ENCODE measurements at regions of chr11 and their contacts with region 1.

Region 1: GRCh38 chr11:5449023-5449422 is at the start of gene OR51I2:
- DNase-seq: no peak
- ATAC-seq: no peak
- H3K4me3 ChIP-seq: no peak within 1 kb of the TSS
- H3K27ac ChIP-seq: no peak within 1 kb of the TSS; the same call in 2 of the 3 replicates
- H3K4me1 ChIP-seq: no peaks in the 10 kb centered on the region; a peak in 1 of 5 replicates
- H3K27me3 ChIP-seq: no peaks in the 10 kb centered on the region
- CTCF ChIP-seq: no peak
- EP300 ChIP-seq: no peak
- POLR2A ChIP-seq: no peak
- RAD21 ChIP-seq: no peak
- polyA plus RNA-seq, gene OR51I2: 0.06 to 0.61 TPM

Region 2: DNA sequence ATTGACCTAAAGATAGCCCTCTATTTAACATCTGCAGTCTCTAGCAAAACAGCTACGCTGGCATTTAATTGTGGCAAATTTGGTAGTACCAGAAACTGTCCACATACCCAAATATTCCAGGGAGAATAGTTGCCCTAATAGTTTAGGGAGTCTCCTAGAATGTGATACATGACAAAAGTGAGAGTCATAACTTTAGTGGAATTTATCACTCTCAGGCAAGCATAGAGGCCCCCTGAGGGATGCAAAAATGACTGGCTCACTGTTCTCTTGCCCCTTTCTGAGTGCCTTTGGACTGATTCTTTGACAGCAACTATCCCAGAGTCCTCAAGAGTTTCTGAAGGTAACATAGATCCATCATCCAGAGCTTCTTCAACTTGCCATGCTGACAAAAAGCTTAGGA is 145.0 kb before region 1 on chr11:
- CTCF ChIA-PET with region 1: no interaction called
- POLR2A ChIA-PET with region 1: interaction called, 3 read pairs
- in situ Hi-C with region 1: loop called (anchors 5 kb)
- intact Hi-C with region 1: no loop called
- DNase-seq: no peak
- ATAC-seq: no peak
- H3K4me3 ChIP-seq: no peak overlapping the region
- H3K27ac ChIP-seq: no peak overlapping the region
- H3K4me1 ChIP-seq: peaks cover 0 to 3% of the 10 kb centered on the region in 2 experiments; a peak in 2 of 5 replicates
- H3K27me3 ChIP-seq: no peaks in the 10 kb centered on the region
- CTCF ChIP-seq: no peak
- EP300 ChIP-seq: no peak
- POLR2A ChIP-seq: no peak
- RAD21 ChIP-seq: no peak

Region 3: DNA sequence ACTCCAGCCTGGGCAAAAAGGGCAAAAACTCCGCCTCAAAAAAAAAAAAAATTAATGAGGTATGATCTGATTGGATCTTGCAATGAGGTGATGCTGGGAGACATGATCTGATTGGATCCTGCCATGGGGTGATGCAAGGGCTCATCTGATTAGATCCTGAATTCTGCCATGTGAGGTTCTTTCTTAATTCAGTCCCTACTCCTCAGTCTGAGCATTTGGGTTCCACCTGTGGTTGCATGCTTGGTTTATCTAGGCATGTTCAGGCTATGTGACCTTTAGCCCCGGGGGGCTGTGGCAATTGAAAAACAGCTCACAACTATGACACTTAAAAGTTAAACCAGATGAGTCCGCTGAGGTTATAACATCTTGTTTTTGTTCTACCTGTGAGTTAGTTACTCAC is 142.6 kb after region 1 on chr11:
- CTCF ChIA-PET with region 1: no interaction called
- POLR2A ChIA-PET with region 1: no interaction called
- in situ Hi-C with region 1: no loop called
- intact Hi-C with region 1: no loop called
- DNase-seq: peak; percentile 21 to 78 (median 36)
- ATAC-seq: peak; percentile 60
- H3K4me3 ChIP-seq: no peak overlapping the region
- H3K27ac ChIP-seq: peak overlapping the region; percentile 50
- H3K4me1 ChIP-seq: peaks cover 6 to 12% of the 10 kb centered on the region in 2 experiments; a peak in 4 of 5 replicates
- H3K27me3 ChIP-seq: no peaks in the 10 kb centered on the region
- CTCF ChIP-seq: no peak
- EP300 ChIP-seq: peak; percentile 52; the same call in 1 of the 2 replicates
- POLR2A ChIP-seq: no peak
- RAD21 ChIP-seq: no peak